Ascending aorta (tissue), 2 donors: ENCODE measurements at regions of chr22 and their contacts with region 1.

Region 1: DNA sequence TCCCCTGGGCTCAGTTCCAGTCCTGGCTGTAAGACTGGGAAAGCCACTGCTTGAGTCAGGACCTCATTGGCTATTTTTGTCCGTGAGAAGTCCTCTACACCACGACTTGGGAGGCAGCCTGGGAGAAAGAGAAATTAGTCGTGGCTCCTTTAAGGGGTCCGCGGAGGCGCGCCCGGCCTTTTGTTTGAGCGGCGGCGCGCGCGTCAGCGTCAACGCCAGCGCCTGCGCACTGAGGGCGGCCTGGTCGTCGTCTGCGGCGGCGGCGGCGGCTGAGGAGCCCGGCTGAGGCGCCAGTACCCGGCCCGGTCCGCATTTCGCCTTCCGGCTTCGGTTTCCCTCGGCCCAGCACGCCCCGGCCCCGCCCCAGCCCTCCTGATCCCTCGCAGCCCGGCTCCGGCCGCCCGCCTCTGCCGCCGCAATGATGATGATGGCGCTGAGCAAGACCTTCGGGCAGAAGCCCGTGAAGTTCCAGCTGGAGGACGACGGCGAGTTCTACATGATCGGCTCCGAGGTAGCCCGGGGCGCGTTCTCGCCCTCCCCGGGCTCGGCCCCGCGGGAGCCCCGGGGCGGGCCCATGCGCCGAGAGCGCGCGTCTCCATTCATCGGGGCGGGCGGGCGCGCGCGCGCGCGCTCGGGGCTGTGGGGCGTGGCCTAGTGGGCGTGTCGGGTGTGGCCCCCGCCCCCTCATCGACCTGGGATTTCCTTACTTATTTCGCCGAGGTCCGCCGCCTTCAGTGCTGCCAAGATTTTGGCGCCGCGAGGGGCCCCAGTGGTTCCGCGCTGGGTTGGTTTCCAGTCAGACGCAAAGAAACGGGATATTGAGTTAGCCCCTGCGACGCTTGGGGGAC is at the start of gene SMARCB1:
- DNase-seq: peak; percentile 79 to 97
- H3K4me3 ChIP-seq: peak within 1 kb of the TSS; percentile 93 to 99
- H3K27ac ChIP-seq: peak within 1 kb of the TSS; percentile 99 to 100
- H3K4me1 ChIP-seq: peaks cover 4 to 10% of the 10 kb centered on the region in 2 donors
- H3K27me3 ChIP-seq: no peaks in the 10 kb centered on the region
- CTCF ChIP-seq: no peak
- total RNA-seq, gene SMARCB1: 22.1 TPM

Region 2: DNA sequence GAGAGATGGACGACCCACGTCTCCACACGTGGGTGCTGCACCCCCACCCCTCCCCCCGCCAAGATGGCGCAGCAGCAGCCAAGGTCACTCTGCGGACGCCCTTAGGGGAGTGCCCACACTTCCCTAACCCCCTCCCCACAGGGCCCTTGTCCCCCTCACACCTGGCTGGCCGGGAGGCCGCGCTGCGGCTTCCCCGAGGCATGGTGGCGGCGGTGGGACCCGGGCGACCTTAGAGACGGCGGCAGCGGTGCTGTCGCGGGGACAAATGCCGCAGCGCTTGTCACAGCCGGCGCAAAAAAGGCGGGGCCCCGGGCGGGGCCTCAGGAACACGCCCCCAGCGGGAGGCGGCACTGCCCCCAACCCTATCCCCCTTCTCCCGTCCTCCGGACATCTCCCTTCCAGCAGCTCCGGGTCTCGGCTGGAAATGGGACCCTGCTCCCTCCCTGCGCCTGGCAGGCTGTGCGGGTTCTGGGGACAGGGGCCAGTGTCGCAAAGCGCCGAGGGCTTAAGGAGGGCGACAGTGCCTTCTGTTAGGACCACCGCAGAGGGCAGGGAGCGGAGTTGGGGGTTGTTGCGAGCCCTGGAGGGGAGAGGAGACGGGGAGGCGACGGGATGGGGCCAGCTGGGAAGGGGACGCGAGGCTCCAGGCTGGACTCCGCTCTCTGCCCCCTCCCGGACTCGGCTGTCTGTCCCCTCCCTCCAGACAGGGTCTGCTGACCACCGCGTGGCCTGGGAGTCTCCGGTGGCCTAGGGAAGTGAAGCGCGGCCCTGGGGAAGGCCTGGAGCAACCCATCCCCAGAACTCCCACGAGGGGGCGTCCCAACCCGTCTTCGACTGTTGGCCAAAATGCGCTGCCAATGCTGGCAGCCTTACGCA is 19.1 kb before region 1 on chr22 and contains the start of gene CHCHD10:
- intact Hi-C with region 1: loop called (anchors 2 kb)
- DNase-seq: peak; percentile 35 to 89
- H3K4me3 ChIP-seq: peak within 1 kb of the TSS; percentile 70 to 75
- H3K27ac ChIP-seq: peak within 1 kb of the TSS; percentile 71 to 74
- H3K4me1 ChIP-seq: peaks cover 7 to 26% of the 10 kb centered on the region in 2 donors
- H3K27me3 ChIP-seq: no peaks in the 10 kb centered on the region
- CTCF ChIP-seq: peak; percentile 77 to 84 (median 82)
- total RNA-seq, gene CHCHD10: 2.0 TPM